Activated B cell treated with CpG ODN at 0.5 μM for 24 hours (primary cell): ENCODE measurements at regions of chr14 and their contacts with region 1.

Region 1: DNA sequence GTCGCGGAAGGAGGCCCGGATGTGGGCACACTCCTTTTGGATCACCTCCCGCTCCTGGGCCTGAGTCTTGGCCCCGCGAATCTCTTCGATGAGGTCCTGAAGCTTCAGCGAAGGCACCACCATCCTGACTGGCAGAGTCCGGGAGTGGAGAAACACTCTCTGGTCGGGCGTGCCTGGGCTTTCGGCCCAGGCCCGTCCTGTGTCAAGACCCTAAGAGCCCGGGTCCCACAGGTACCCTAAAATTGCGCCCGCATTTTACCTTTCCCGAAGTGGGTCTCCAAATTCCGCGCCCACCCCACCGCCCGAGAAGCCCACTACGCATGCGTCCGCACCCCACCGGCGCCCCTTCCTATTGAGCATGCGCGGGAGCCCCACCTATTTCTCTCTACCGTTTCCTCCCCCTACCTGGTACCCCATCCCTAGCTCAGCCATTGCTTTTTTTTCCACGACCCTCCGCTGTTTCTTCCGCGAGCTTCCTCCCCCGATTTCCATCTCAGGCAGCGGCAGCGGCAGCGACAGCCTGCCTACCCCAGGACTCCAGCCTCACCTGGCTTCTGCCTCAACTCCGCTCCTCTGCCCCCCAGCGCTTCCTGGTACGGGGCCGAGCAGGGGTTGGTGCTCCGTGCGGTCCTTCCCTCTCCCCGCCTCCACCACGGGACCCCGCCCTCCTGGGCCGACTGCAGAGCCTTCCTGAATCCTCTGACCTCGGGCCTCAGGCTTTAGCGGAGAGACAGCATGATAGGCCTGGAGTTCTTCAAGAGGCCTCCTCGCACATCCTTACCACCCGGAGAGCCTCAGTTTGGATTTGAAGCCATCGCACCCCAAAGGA is at the start of gene AP1G2:
- DNase-seq: peak; percentile 87
- ATAC-seq: peak; percentile 96
- H3K4me3 Mint-ChIP-seq: peak within 1 kb of the TSS; percentile 100
- H3K27ac Mint-ChIP-seq: peak within 1 kb of the TSS; percentile 98
- H3K4me1 Mint-ChIP-seq: peaks cover 32% of the 10 kb centered on the region
- H3K27me3 Mint-ChIP-seq: peaks cover 9% of the 10 kb centered on the region
- CTCF ChIP-seq: no peak
- total RNA-seq, gene AP1G2: 336 and 373 TPM in 2 replicates

Region 2: GRCh38 chr14:23269193-23269592 is 298.2 kb before region 1 on chr14:
- CTCF ChIA-PET with region 1: no interaction called
- POLR2A ChIA-PET with region 1: no interaction called
- intact Hi-C with region 1: loop called (anchors 1 kb)
- DNase-seq: no peak
- ATAC-seq: no peak
- H3K4me3 Mint-ChIP-seq: no peak overlapping the region
- H3K27ac Mint-ChIP-seq: no peak overlapping the region
- H3K4me1 Mint-ChIP-seq: no peaks in the 10 kb centered on the region
- H3K27me3 Mint-ChIP-seq: peaks cover 13% of the 10 kb centered on the region
- CTCF ChIP-seq: no peak

Region 3: GRCh38 chr14:23327947-23328744 is 239.3 kb before region 1 on chr14:
- CTCF ChIA-PET with region 1: interaction called, 4 read pairs
- POLR2A ChIA-PET with region 1: no interaction called
- intact Hi-C with region 1: loop called (anchors 1 kb)
- DNase-seq: no peak
- ATAC-seq: peak; percentile 73
- H3K4me3 Mint-ChIP-seq: no peak overlapping the region
- H3K27ac Mint-ChIP-seq: no peak overlapping the region
- H3K4me1 Mint-ChIP-seq: peaks cover 3% of the 10 kb centered on the region
- H3K27me3 Mint-ChIP-seq: no peaks in the 10 kb centered on the region
- CTCF ChIP-seq: peak; percentile 42

Region 4: GRCh38 chr14:23469127-23469905 is 98.1 kb before region 1 on chr14 and contains the start of gene NGDN:
- CTCF ChIA-PET with region 1: interaction called, 5 read pairs
- POLR2A ChIA-PET with region 1: interaction called, 4 read pairs
- intact Hi-C with region 1: loop called (anchors 1 kb)
- DNase-seq: peak; percentile 80
- ATAC-seq: peak; percentile 90
- H3K4me3 Mint-ChIP-seq: no peak within 1 kb of the TSS
- H3K27ac Mint-ChIP-seq: no peak within 1 kb of the TSS
- H3K4me1 Mint-ChIP-seq: peaks cover 11% of the 10 kb centered on the region
- H3K27me3 Mint-ChIP-seq: no peaks in the 10 kb centered on the region
- CTCF ChIP-seq: no peak
- total RNA-seq, gene NGDN: 60.5 and 67.4 TPM in 2 replicates

Region 5: GRCh38 chr14:23478111-23478759 is 89.2 kb before region 1 on chr14:
- CTCF ChIA-PET with region 1: interaction called, 32 read pairs
- POLR2A ChIA-PET with region 1: interaction called, 13 read pairs
- intact Hi-C with region 1: loop called (anchors 1 kb)
- DNase-seq: peak; percentile 25
- ATAC-seq: peak; percentile 62
- H3K4me3 Mint-ChIP-seq: no peak overlapping the region
- H3K27ac Mint-ChIP-seq: no peak overlapping the region
- H3K4me1 Mint-ChIP-seq: peaks cover 2% of the 10 kb centered on the region
- H3K27me3 Mint-ChIP-seq: no peaks in the 10 kb centered on the region
- CTCF ChIP-seq: no peak

Region 6: GRCh38 chr14:23512156-23512555 is 55.2 kb before region 1 on chr14:
- CTCF ChIA-PET with region 1: no interaction called
- POLR2A ChIA-PET with region 1: no interaction called
- intact Hi-C with region 1: no loop called
- DNase-seq: no peak
- ATAC-seq: no peak
- H3K4me3 Mint-ChIP-seq: peak overlapping the region; percentile 50
- H3K27ac Mint-ChIP-seq: no peak overlapping the region
- H3K4me1 Mint-ChIP-seq: peaks cover 2% of the 10 kb centered on the region
- H3K27me3 Mint-ChIP-seq: no peaks in the 10 kb centered on the region
- CTCF ChIP-seq: no peak

Region 7: GRCh38 chr14:23539248-23540140 is 27.9 kb before region 1 on chr14:
- CTCF ChIA-PET with region 1: no interaction called
- POLR2A ChIA-PET with region 1: no interaction called
- intact Hi-C with region 1: loop called (anchors 1 kb)
- DNase-seq: no peak
- ATAC-seq: peak; percentile 76
- H3K4me3 Mint-ChIP-seq: no peak overlapping the region
- H3K27ac Mint-ChIP-seq: no peak overlapping the region
- H3K4me1 Mint-ChIP-seq: no peaks in the 10 kb centered on the region
- H3K27me3 Mint-ChIP-seq: peaks cover 2% of the 10 kb centered on the region
- CTCF ChIP-seq: peak; percentile 29